HCT116 (cell line): ENCODE measurements at regions of chr10 and their contacts with region 1.

Region 1: GRCh38 chr10:15658069-15658702 is 61.5 kb downstream of the ITGA8 start:
- DNase-seq: no peak
- ATAC-seq: no peak
- H3K4me3 ChIP-seq: no peak overlapping the region
- H3K27ac ChIP-seq: no peak overlapping the region
- H3K4me1 ChIP-seq: no peaks in the 10 kb centered on the region
- H3K27me3 ChIP-seq: no peaks in the 10 kb centered on the region; the same call in 1 of the 2 replicates
- CTCF ChIP-seq: no peak
- POLR2A ChIP-seq: no peak
- RAD21 ChIP-seq: no peak

Region 2: DNA sequence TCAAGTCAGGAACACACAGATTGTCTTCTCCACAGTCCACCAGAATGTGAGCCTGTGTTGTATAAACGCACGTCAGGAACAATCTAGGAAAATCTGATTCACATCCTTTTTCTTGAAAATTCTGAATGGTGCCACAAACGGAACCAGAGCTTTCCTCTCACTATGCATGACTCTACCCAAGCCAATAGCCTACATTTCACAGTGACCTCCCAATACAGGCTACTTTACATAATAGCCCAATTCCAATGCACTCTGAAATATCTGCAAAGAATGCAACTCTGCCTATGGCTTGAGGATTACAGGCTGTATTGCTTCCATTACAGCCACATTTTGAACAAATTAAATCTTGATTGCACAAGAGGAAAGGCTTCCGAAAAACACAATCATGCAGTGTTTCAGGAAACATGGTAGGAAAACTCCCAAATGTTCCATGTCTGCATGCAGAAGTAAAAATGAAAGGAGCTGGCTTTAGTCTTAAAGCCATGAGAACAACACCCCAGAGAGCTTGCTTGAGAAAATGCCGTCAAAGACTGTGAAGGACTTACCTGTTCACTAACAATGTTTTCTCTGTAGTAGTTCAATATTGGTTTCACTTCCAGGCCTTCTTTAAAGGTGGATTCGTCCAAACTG is 52.3 kb before region 1 on chr10:
- CTCF ChIA-PET with region 1: no interaction called
- POLR2A ChIA-PET with region 1: no interaction called
- RAD21 ChIA-PET with region 1: no interaction called
- intact Hi-C with region 1: loop called (anchors 5 kb)
- DNase-seq: no peak
- ATAC-seq: no peak
- H3K4me3 ChIP-seq: no peak overlapping the region
- H3K27ac ChIP-seq: no peak overlapping the region
- H3K4me1 ChIP-seq: no peaks in the 10 kb centered on the region
- H3K27me3 ChIP-seq: peaks cover 87% of the 10 kb centered on the region
- CTCF ChIP-seq: no peak
- POLR2A ChIP-seq: no peak
- RAD21 ChIP-seq: no peak